HCT116 (cell line): ENCODE measurements at regions of chr19 and their contacts with region 1.

Region 1: GRCh38 chr19:50003810-50004419 is 21.3 kb downstream of the VRK3 start:
- DNase-seq: peak; percentile 73
- ATAC-seq: peak; percentile 94
- H3K4me3 ChIP-seq: peak overlapping the region; percentile 33 to 50
- H3K27ac ChIP-seq: peak overlapping the region; percentile 100
- H3K4me1 ChIP-seq: peaks cover 26 to 33% of the 10 kb centered on the region in 2 experiments
- H3K27me3 ChIP-seq: no peaks in the 10 kb centered on the region
- CTCF ChIP-seq: no peak
- POLR2A ChIP-seq: no peak
- RAD21 ChIP-seq: no peak; the same call in 1 of the 2 replicates

Region 2: DNA sequence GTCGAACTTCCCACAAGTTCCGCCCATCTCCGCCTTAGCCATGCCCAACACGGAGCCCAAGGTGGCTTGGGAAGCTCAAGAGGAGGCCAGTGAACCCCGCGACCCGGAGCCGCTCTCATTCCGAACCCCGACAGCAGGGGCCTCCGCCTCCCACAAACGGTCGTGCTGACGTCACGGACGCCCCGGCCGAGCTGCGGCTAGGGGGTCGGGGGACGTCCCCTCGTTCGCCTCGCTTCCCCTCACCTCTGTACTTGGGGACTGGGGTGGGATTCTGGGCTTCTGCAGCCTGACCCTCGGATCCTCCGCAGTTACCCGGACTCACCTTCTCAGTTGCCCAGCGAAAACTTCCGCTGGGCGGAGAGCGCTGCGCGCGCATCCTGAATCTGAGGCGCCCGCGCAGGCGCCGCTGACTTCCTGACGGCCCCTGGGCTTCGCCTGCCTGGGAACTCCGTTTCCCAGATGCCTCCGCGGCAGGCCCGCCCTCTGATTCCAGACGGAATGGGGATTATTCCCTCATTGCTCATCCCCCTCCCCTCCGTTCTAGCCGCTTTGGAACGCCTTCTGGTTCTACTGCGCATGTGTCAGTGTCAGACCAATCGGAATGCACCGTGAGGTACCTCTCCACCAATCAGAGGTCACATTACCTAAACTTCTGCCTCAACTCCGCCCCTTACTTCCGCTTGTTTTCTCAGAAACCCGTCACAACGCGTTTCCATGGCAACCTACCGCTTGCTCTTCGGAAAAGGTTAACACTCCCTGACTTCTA is 21.3 kb after region 1 on chr19 and contains the start of gene VRK3:
- CTCF ChIA-PET with region 1: no interaction called
- POLR2A ChIA-PET with region 1: no interaction called
- RAD21 ChIA-PET with region 1: no interaction called
- intact Hi-C with region 1: loop called (anchors 1 kb)
- DNase-seq: peak; percentile 100
- ATAC-seq: peak; percentile 94
- H3K4me3 ChIP-seq: peak within 1 kb of the TSS; percentile 68 to 100
- H3K27ac ChIP-seq: peak within 1 kb of the TSS; percentile 79
- H3K4me1 ChIP-seq: peaks cover 5 to 23% of the 10 kb centered on the region in 2 experiments; a peak in 2 of 4 replicates
- H3K27me3 ChIP-seq: no peaks in the 10 kb centered on the region
- CTCF ChIP-seq: no peak
- POLR2A ChIP-seq: no peak
- RAD21 ChIP-seq: no peak
- total RNA-seq, gene VRK3: 44.0 TPM